ENCODE measurements at regions of chr10 and their contacts with region 1.

Region 1: DNA sequence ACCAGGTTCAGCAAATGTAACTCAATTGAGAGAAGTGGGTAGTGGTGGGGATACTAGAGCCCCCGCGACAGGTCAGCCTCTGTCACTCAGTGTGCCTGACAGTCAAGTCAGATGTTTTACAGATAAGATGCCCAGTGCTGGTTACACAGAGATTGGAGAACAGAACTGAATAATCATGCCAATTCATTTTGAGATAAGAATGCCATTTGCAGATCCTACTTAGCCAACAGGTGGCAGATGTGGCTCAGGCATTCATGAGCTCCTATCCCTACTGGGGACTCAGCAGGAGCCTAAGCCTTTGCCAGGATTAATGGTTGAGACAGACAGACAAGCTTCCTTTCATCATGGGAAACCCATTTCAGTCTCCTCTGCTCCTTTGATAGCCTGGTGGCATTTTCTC is 137.8 kb downstream of the MAPK8 start:
- DNase-seq: peak; percentile 42
- H3K4me3 ChIP-seq: no peak overlapping the region
- CTCF ChIP-seq: peak; percentile 53

Region 2: GRCh38 chr10:48389272-48389671 is 55.0 kb before region 1 on chr10:
- in situ Hi-C with region 1: loop called (anchors 5 kb)
- DNase-seq: no peak
- H3K4me3 ChIP-seq: no peak overlapping the region
- CTCF ChIP-seq: no peak

Region 3: DNA sequence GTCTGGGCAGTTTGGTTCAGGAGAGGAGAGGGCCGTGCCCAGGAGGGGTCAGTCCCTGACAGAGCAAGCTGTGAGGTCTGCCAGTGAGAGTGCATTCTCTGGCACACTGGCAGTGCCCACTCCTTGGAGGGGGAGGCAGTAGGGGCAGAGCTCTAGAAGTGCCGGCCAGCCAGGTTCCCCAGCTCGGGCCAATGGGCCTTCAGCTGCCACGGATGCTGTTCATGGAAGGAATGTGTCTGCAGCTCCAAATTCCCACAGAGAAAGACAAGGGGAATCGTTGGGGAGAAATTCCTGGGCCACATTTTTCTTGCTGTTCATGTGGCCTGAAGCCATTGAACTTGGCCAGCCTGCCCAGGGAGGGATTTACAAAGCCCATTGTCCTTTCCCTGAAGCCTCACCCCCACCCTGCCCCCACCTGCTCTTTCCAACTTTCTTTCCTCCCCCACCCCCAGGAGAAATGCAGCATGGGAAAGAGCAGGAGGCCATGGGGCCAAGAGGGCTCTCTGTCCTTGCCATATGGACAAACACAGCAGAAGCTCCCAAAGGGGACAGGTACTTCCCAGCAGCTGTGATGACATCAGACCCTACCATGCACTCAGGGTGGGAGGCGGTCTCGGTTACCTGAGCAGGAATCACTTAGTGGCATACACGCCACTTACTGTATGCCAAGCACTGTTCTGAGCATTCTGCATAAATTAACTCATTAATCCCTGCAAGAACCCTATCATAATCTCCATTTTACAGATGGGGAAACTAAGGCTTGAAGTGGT is 89.9 kb after region 1 on chr10:
- in situ Hi-C with region 1: loop called (anchors 10 kb)
- DNase-seq: peak; percentile 74
- H3K4me3 ChIP-seq: no peak overlapping the region
- CTCF ChIP-seq: no peak

Measured in astrocyte of the cerebellum (primary cell).